Activated CD4-positive, alpha-beta memory T cell treated with anti-CD3 and anti-CD28 coated beads for 36 hours (primary cell): ENCODE measurements at regions of chrX and their contacts with region 1.

Region 1: GRCh38 chrX:151680805-151681204 is 14.5 kb upstream of the PRRG3 start:
- DNase-seq: peak; percentile 68
- H3K4me3 Mint-ChIP-seq: no peak overlapping the region
- H3K27ac Mint-ChIP-seq: no peak overlapping the region
- H3K4me1 Mint-ChIP-seq: no peaks in the 10 kb centered on the region
- H3K27me3 Mint-ChIP-seq: peaks cover 9% of the 10 kb centered on the region

Region 2: DNA sequence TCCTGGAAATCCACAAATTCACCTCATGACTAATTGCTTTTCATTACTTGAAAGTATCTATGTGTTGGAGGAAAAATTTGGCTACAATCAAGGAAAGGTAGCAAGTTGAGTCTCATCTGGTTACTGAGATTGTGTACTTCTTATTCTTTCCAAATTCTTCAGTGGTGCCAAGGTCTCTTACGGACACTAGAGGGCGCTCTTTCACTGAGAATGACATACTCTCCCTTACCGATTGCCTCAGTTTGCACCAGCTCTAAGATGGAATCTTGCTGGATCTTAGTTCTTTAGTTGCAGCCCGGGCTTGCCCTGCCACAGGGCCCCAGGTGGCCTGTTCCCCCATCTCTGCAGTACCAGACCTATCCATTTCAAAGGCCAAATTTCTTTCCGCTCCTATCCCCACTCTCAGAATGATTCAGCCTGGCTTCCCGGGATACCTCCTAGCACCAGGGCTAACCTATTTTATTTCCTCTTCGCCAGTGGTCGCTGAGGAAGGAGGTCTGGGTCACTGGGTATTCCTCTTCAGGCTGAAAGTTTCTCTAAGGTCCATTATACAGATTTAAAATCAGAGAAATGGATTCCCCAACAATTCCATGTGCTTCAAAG is 529.0 kb before region 1 on chrX:
- CTCF ChIA-PET with region 1: interaction called, 15 read pairs
- POLR2A ChIA-PET with region 1: no interaction called
- intact Hi-C with region 1: loop called (anchors 1 kb)
- DNase-seq: peak; percentile 25
- H3K4me3 Mint-ChIP-seq: no peak overlapping the region
- H3K27ac Mint-ChIP-seq: no peak overlapping the region
- H3K4me1 Mint-ChIP-seq: no peaks in the 10 kb centered on the region
- H3K27me3 Mint-ChIP-seq: peaks cover 15% of the 10 kb centered on the region

Region 3: GRCh38 chrX:151505796-151506195 is 175.0 kb before region 1 on chrX:
- CTCF ChIA-PET with region 1: interaction called, 4 read pairs
- POLR2A ChIA-PET with region 1: no interaction called
- intact Hi-C with region 1: loop called (anchors 5 kb)
- DNase-seq: peak; percentile 9
- H3K4me3 Mint-ChIP-seq: no peak overlapping the region
- H3K27ac Mint-ChIP-seq: no peak overlapping the region
- H3K4me1 Mint-ChIP-seq: no peaks in the 10 kb centered on the region
- H3K27me3 Mint-ChIP-seq: peaks cover 11% of the 10 kb centered on the region

Region 4: DNA sequence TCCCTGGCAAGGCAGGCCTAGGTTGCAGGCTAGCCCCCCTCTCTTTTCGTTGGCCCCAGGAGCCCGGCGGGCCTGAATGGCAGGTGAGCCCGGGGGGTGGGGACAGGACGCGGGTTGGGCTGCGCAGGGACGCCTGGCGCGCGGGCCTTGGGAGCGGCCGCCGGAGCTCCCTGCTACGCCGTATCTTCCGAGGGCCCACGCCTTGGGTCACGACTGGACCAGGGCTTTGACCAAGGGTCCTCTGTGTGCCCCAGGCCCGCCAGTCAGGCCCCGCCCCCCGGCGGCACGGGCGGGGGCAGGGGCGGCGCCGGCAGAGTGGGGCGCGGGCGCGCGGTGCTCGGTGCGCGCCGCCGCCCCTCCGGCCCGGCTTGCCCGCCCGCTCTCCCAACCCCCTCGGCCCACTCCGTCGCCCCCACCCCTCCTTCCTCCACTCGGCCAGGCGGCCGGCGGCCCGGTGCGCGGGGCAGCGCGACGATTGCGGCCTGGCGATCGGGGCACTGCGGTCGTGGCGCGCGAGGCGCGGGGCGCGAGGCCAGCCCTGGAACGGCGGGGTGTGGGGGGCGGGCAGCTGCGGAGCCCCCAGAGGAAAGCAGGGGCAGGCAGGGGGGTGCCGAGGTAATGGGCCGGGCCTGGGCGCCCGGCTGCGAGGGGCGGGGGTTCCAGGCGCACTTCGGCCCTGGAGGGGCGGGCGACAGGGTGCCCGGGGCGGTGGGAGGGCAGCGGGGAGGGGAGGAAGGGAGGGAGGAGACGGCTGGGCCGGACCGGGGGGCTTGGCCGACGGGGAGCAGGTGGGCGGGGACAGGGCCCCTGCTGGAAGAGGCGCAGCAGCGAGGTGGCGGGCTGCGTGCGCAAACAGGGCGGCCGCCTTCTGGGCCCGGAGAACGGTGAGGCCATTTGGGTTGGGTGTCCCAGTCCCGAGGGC is 14.1 kb after region 1 on chrX and contains the start of gene PRRG3:
- CTCF ChIA-PET with region 1: no interaction called
- POLR2A ChIA-PET with region 1: no interaction called
- intact Hi-C with region 1: no loop called
- DNase-seq: no peak
- H3K4me3 Mint-ChIP-seq: no peak within 1 kb of the TSS
- H3K27ac Mint-ChIP-seq: no peak within 1 kb of the TSS
- H3K4me1 Mint-ChIP-seq: no peaks in the 10 kb centered on the region
- H3K27me3 Mint-ChIP-seq: peaks cover 11% of the 10 kb centered on the region
- total RNA-seq, gene PRRG3: not detected

Region 5: DNA sequence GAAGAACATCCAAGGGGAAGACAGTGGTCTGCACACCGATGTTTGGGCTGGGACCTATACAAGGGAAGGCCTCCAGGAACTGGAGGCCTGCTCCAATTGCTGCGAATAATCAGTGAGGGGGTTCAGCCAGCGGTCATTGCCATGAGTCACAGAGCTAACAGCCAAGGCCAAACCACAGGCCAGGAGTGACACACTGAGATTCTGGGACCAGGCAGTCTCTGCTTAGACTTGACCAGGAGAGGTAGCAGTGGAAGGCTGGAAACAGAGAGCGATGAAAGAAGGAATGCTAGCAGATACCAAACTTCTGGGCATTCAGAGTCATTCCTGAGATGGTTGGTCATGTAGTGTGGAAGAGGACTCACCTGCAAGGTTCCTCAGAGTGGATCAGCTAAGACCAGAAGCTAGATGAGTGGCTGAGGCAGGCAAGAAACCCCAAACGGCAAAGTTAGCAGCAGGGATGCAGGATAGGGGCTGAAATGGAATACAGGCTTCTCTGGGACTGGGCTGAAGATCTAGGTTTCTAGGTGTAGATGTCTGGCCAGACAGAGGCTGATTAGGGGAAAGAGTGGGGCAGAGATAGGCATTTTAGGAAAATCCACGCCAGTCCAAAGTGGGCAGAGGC is 108.5 kb after region 1 on chrX:
- CTCF ChIA-PET with region 1: no interaction called
- POLR2A ChIA-PET with region 1: no interaction called
- intact Hi-C with region 1: no loop called
- DNase-seq: no peak
- H3K4me3 Mint-ChIP-seq: no peak overlapping the region
- H3K27ac Mint-ChIP-seq: no peak overlapping the region
- H3K4me1 Mint-ChIP-seq: no peaks in the 10 kb centered on the region
- H3K27me3 Mint-ChIP-seq: no peaks in the 10 kb centered on the region